ENCODE measurements at regions of chr2 and their contacts with region 1.

Region 1: DNA sequence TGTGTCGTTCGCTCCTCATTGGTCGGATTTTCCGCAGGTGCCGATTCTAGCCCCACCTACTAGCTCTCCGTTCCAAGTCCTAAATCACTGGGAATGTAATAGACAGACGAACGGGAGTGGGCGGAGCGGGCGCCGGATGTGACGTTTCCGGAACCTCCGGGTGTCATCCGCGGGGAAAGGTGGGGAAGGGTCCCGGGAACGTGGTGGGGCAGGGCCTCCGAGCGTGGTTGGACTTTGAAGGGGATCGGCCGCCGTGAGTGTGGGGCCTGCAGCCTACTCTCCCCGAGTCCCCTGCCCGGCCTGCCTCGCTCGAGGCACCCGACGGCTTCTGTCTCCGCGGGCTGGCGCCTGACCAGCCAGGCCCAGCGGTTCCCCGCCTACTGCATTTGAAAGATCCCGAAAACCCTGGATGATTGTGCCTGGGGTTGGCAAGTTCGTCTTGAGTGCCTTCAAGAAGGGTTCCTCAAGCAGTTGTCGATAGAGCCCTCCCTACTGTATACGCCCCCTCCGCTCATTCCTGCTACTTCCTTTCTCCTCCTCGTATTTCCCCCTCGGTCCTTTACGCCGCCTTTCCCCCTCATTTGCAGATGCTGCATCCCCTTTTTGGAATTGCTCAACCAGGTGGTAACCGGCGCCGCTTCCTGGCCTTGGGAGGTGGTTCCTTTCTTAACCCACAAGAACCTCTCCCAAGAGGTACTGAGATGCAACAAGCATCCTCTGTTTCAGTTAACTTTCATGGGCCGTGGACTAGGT is at the start of gene STAMBP:
- DNase-seq: peak; percentile 98
- H3K4me3 ChIP-seq: peak within 1 kb of the TSS; percentile 72 to 84 (median 80)
- H3K27ac ChIP-seq: peak within 1 kb of the TSS; percentile 94 to 98 (median 95)
- H3K4me1 ChIP-seq: peaks cover 4 to 35% (median 14%) of the 10 kb centered on the region in 4 donors
- H3K27me3 ChIP-seq: no peaks in the 10 kb centered on the region
- CTCF ChIP-seq: no peak
- EP300 ChIP-seq: no peak
- POLR2A ChIP-seq: peak; percentile 76
- total RNA-seq, gene STAMBP: 22.7 to 1,127 (median 37.3) TPM

Region 2: DNA sequence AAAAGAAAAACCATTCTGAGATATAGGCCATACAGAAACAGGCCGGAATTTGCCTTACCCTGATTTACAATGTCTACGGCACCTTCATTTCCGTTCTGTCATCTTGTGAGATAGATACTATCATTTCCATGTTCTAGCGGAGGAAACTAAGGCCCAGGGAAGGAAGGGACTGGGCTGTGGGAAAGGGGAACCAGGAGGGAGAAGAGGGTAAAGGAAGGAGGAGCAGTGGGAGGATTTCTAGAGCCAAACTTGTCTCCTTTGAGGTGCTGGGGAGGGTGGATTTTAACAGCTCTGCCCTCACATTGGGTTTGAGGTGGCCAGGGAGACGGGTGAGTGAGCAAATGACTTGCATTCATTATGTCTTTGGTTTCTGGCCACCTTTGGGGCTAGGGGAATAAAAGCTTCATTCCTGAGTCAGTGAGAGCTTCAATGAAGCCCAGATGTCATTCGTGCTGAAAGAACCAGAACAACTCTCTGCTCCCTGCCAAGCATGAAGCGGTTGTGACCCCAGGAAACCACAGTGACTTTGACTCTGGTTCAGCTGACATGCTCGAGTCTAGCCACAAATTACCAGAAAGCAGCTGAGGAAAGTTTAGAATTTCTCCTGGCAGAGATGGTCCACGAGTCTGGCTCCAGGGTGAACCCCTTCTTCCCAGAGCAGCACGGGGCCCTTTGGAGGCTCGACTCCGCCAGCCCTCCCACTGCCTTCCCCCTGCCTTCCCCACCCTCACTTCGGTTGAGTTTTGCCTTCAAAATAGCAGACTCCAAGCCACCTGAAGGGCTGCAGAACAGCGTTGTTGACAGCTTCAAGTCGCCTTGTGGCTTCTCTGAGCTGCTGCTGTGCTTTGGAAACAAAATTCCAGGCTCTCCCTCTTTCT is 67.6 kb after region 1 on chr2:
- in situ Hi-C with region 1: no loop called
- intact Hi-C with region 1: loop called (anchors 10 kb)
- DNase-seq: no peak
- H3K4me3 ChIP-seq: peak overlapping the region; percentile 4 to 42 (median 34)
- H3K27ac ChIP-seq: peak overlapping the region; percentile 78 to 89 (median 88)
- H3K4me1 ChIP-seq: peaks cover 0 to 7% (median 0%) of the 10 kb centered on the region in 4 donors
- H3K27me3 ChIP-seq: no peaks in the 10 kb centered on the region
- CTCF ChIP-seq: no peak
- EP300 ChIP-seq: no peak
- POLR2A ChIP-seq: no peak

Region 3: GRCh38 chr2:73985308-73986084 is 156.5 kb after region 1 on chr2:
- in situ Hi-C with region 1: loop called in 2 of 4 experiments (anchors 10 to 25 kb)
- intact Hi-C with region 1: loop called (anchors 10 kb)
- DNase-seq: peak; percentile 40
- H3K4me3 ChIP-seq: peak overlapping the region; percentile 10 to 73 (median 65)
- H3K27ac ChIP-seq: peak overlapping the region; percentile 89 to 96 (median 92)
- H3K4me1 ChIP-seq: peaks cover 27 to 77% (median 68%) of the 10 kb centered on the region in 4 donors
- H3K27me3 ChIP-seq: no peaks in the 10 kb centered on the region
- CTCF ChIP-seq: no peak
- EP300 ChIP-seq: no peak
- POLR2A ChIP-seq: peak; percentile 38

Region 4: GRCh38 chr2:73999881-74000597 is 171.0 kb after region 1 on chr2:
- in situ Hi-C with region 1: loop called in 2 of 4 experiments (anchors 10 to 25 kb)
- intact Hi-C with region 1: no loop called
- DNase-seq: peak; percentile 44
- H3K4me3 ChIP-seq: no peak overlapping the region
- H3K27ac ChIP-seq: peak overlapping the region in 1 of 4 donors; percentile 43
- H3K4me1 ChIP-seq: peaks cover 6 to 47% (median 28%) of the 10 kb centered on the region in 4 donors
- H3K27me3 ChIP-seq: no peaks in the 10 kb centered on the region
- CTCF ChIP-seq: no peak
- EP300 ChIP-seq: no peak
- POLR2A ChIP-seq: no peak

Region 5: DNA sequence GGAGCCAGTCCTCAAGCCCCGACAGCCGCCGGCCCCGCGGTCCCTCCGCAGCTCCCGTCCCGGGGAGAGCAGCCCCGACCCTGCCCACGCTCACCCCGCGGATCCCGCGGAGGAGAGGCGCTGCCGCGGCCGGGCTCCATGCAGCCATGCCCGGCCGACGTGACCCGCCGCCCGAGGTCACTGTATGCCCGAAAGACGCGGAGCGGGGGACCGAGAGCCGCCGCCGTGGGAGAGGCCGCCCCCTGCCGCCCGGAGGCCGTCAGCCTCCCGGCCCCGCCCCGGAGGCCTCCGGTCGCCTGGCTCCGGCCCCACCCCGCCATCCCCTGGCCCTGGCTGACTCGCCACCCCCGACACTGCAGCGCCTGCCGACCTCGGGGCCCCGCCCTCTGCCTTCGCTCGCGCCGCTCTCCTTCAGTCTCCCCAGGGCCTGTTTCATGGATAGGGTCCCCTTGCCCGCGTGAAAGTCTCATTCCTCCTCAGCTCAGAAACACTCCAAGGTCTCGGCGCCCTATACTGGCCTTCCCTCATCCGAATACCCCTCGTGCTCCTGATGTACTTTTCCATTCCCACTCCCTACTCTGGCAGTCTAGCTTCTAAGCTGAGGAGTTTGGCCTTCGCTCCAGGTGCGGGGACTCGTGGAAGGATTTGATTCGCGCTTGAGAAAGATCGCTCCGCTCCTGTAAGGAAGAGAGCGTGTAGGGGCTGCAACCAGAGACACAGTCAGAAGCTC is 318.9 kb after region 1 on chr2 and contains the start of gene BOLA3:
- in situ Hi-C with region 1: loop called in 3 of 4 experiments (anchors 25 kb)
- intact Hi-C with region 1: no loop called
- DNase-seq: peak; percentile 89
- H3K4me3 ChIP-seq: peak within 1 kb of the TSS; percentile 54 to 92 (median 72)
- H3K27ac ChIP-seq: peak within 1 kb of the TSS; percentile 72 to 79 (median 74)
- H3K4me1 ChIP-seq: peaks cover 8 to 22% (median 17%) of the 10 kb centered on the region in 4 donors
- H3K27me3 ChIP-seq: no peaks in the 10 kb centered on the region
- CTCF ChIP-seq: peak in 4 of 5 experiments; percentile 53 to 72 (median 64)
- EP300 ChIP-seq: no peak
- POLR2A ChIP-seq: no peak
- total RNA-seq, gene BOLA3: 3.0 to 51.5 (median 44.0) TPM in 3 of 4 donors, not detected in the other

Region 6: DNA sequence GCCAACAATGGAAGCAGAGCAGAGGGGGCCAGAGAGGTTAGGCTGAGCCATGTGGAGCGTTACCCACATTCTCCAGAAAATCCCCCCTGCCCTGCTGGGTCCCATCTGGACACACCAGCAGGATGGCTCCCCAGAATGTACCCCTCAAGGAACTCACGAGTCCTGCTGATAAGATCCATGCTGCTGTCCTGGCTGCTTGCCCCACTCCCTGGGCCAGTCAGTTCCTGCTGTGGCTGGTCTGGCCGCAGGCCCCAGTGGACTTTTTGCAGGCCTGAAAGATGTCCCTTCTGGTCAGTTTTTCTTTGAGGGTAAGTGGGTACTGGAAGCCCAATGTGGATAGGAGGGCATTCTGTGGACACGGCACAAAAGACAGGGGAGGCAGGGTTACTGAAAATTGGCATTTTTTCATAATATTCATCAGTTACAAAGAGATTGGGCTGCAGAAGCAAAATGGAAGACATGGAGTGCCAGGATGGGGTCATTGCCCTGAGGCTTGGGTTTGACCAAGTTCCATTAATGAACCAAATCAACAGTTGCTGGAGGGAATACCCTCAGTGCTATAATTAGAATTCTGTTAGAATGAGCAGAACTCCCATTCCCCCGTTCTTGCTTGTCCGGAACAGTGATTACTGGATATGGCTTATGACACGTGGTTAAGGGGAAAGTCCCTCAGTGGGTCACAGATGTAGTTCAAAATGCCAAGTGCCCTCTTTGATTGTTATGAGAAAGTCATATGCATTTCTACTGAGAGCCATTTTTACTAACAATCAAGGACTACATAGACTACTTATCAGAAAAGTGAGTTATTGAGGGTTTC is 475.5 kb after region 1 on chr2:
- in situ Hi-C with region 1: no loop called
- intact Hi-C with region 1: no loop called
- DNase-seq: no peak
- H3K4me3 ChIP-seq: no peak overlapping the region
- H3K27ac ChIP-seq: no peak overlapping the region
- H3K4me1 ChIP-seq: no peaks in the 10 kb centered on the region
- H3K27me3 ChIP-seq: no peaks in the 10 kb centered on the region
- CTCF ChIP-seq: no peak
- EP300 ChIP-seq: no peak
- POLR2A ChIP-seq: no peak

Region 7: GRCh38 chr2:74334931-74335333 is 505.9 kb after region 1 on chr2:
- in situ Hi-C with region 1: loop called in 1 of 4 experiments (anchors 25 kb)
- intact Hi-C with region 1: loop called (anchors 10 kb)
- DNase-seq: peak; percentile 86
- H3K4me3 ChIP-seq: no peak overlapping the region
- H3K27ac ChIP-seq: no peak overlapping the region
- H3K4me1 ChIP-seq: no peaks in the 10 kb centered on the region
- H3K27me3 ChIP-seq: no peaks in the 10 kb centered on the region
- CTCF ChIP-seq: peak; percentile 80 to 98 (median 93)
- EP300 ChIP-seq: no peak
- POLR2A ChIP-seq: no peak

Measured in transverse colon (tissue), 4 donors.